B cell (primary cell): ENCODE measurements at regions of chr5 and their contacts with region 1.

Region 1: GRCh38 chr5:16558984-16559629 is 57.7 kb downstream of the RETREG1 start:
- DNase-seq: no peak
- ATAC-seq: no peak
- H3K4me3 ChIP-seq: no peak overlapping the region
- H3K4me3 Mint-ChIP-seq: no peak overlapping the region
- H3K27ac ChIP-seq: no peak overlapping the region
- H3K27ac Mint-ChIP-seq: no peak overlapping the region
- H3K4me1 ChIP-seq: peaks cover 9% of the 10 kb centered on the region in 2 donors
- H3K4me1 Mint-ChIP-seq: peaks cover 13% of the 10 kb centered on the region
- H3K27me3 ChIP-seq: no peaks in the 10 kb centered on the region
- H3K27me3 Mint-ChIP-seq: no peaks in the 10 kb centered on the region
- CTCF ChIP-seq: no peak

Region 2: GRCh38 chr5:16616536-16617273 is 57.6 kb after region 1 on chr5 and contains the start of gene RETREG1:
- CTCF ChIA-PET with region 1: no interaction called
- POLR2A ChIA-PET with region 1: no interaction called
- intact Hi-C with region 1: loop called (anchors 5 kb)
- DNase-seq: peak; percentile 85
- ATAC-seq: peak; percentile 87
- H3K4me3 ChIP-seq: peak within 1 kb of the TSS; percentile 19 to 80 (median 65)
- H3K4me3 Mint-ChIP-seq: peak within 1 kb of the TSS; percentile 93
- H3K27ac ChIP-seq: peak within 1 kb of the TSS; percentile 84 to 91
- H3K27ac Mint-ChIP-seq: peak within 1 kb of the TSS; percentile 90
- H3K4me1 ChIP-seq: peaks cover 18 to 20% of the 10 kb centered on the region in 2 donors
- H3K4me1 Mint-ChIP-seq: peaks cover 15% of the 10 kb centered on the region
- H3K27me3 ChIP-seq: peaks cover 0 to 3% (median 0%) of the 10 kb centered on the region in 4 experiments
- H3K27me3 Mint-ChIP-seq: peaks cover 9% of the 10 kb centered on the region
- CTCF ChIP-seq: no peak
- total RNA-seq, gene RETREG1: 11.4 and 12.9 TPM in 2 replicates